ENCODE measurements at regions of chr6 and their contacts with region 1.

Region 1: DNA sequence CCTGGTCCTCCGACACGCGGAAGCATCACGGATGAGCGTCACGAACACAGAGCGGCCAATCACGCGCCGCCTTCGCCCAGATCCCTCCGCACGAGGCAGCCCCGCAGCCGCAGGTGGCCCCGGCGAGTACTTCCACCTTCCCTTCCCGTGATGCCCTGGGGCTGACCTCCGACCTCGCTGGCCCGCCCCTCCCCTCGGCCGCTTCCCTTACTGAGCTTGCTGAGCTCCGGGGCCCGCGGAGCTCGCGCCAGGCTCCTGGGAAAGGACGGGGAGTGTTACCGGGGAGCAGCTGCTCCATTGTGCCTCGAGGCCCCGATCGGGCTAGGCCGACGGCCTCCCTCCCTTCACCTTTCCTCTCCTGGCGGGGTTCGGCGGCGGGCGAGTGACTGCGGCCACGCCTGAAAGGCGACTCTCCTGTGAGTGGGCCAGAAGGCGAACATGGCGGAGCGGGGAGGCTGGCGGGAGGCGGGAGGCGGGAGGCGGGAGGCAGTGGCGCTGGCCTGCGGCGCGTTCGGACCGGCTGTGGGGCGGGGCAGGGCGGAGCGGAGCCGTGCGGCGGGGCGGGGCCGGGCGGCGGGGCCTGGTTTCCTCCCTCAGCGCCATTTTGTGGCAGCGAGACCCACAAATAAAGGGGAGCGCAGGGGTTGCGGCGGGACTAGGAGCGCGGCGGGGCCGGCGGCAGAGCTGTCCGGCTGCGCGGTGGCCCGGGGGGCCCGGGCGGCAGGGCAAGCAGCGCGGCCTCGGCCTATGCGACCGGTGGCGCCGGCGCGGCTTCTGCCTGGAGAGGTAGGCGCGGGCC is at the start of gene WTAP:
- DNase-seq: peak; percentile 97
- ATAC-seq: peak; percentile 93
- H3K4me3 Mint-ChIP-seq: peak within 1 kb of the TSS; percentile 85
- H3K27ac Mint-ChIP-seq: peak within 1 kb of the TSS; percentile 95
- H3K4me1 Mint-ChIP-seq: peaks cover 44% of the 10 kb centered on the region
- H3K27me3 Mint-ChIP-seq: no peaks in the 10 kb centered on the region
- CTCF ChIP-seq: no peak
- total RNA-seq, gene WTAP: 79.9 to 80.6 TPM

Region 2: GRCh38 chr6:159739341-159739740 is 12.2 kb after region 1 on chr6:
- CTCF ChIA-PET with region 1: interaction called, 8 read pairs
- POLR2A ChIA-PET with region 1: interaction called, 24 read pairs
- intact Hi-C with region 1: no loop called
- DNase-seq: no peak
- ATAC-seq: no peak
- H3K4me3 Mint-ChIP-seq: no peak overlapping the region
- H3K27ac Mint-ChIP-seq: no peak overlapping the region
- H3K4me1 Mint-ChIP-seq: peaks cover 25% of the 10 kb centered on the region
- H3K27me3 Mint-ChIP-seq: no peaks in the 10 kb centered on the region
- CTCF ChIP-seq: no peak

Region 3: GRCh38 chr6:159968440-159969203 is 241.5 kb after region 1 on chr6 and contains the start of gene IGF2R:
- CTCF ChIA-PET with region 1: no interaction called
- POLR2A ChIA-PET with region 1: no interaction called
- intact Hi-C with region 1: loop called (anchors 10 kb)
- DNase-seq: peak; percentile 96
- ATAC-seq: peak; percentile 92
- H3K4me3 Mint-ChIP-seq: peak within 1 kb of the TSS; percentile 93
- H3K27ac Mint-ChIP-seq: peak within 1 kb of the TSS; percentile 93
- H3K4me1 Mint-ChIP-seq: peaks cover 35% of the 10 kb centered on the region
- H3K27me3 Mint-ChIP-seq: no peaks in the 10 kb centered on the region
- CTCF ChIP-seq: no peak
- total RNA-seq, gene IGF2R: 81.7 to 82.4 TPM